ENCODE measurements at regions of chr2 and their contacts with region 1.

Region 1: GRCh38 chr2:41698678-41699422 is 349.0 kb upstream of the PKDCC start:
- DNase-seq: peak; percentile 60 to 85
- ATAC-seq: peak; percentile 67
- H3K4me3 ChIP-seq: peak overlapping the region in 1 of 2 donors; percentile 7
- H3K27ac ChIP-seq: no peak overlapping the region
- H3K4me1 ChIP-seq: peaks cover 0 to 5% of the 10 kb centered on the region in 2 donors
- H3K27me3 ChIP-seq: no peaks in the 10 kb centered on the region

Region 2: GRCh38 chr2:41414486-41415230 is 284.2 kb before region 1 on chr2:
- intact Hi-C with region 1: loop called (anchors 2 to 5 kb)
- DNase-seq: no peak
- ATAC-seq: no peak
- H3K4me3 ChIP-seq: no peak overlapping the region
- H3K27ac ChIP-seq: no peak overlapping the region
- H3K4me1 ChIP-seq: peaks cover 0 to 1% of the 10 kb centered on the region in 2 donors
- H3K27me3 ChIP-seq: no peaks in the 10 kb centered on the region

Region 3: DNA sequence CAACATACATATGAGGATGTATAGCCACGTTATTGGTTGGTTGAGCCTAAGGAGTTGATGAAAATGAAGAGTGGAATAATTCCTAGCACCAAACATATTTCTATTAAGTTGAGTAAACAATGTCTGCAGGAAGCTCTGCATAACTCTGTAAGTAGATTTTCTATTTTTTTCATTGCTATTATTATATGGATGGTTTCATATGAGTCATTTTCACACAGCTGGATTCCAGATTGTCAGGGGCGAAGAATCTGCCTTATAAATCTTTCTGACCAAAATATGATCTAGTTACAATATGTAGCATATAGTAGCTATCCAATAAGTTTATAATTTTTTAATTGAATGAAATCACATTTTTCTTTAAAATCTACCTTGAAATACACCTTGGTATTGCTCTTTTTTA is 119.0 kb before region 1 on chr2:
- intact Hi-C with region 1: loop called in 1 of 2 experiments (anchors 10 kb)
- DNase-seq: no peak
- ATAC-seq: no peak
- H3K4me3 ChIP-seq: no peak overlapping the region
- H3K27ac ChIP-seq: no peak overlapping the region
- H3K4me1 ChIP-seq: no peaks in the 10 kb centered on the region
- H3K27me3 ChIP-seq: no peaks in the 10 kb centered on the region

Region 4: DNA sequence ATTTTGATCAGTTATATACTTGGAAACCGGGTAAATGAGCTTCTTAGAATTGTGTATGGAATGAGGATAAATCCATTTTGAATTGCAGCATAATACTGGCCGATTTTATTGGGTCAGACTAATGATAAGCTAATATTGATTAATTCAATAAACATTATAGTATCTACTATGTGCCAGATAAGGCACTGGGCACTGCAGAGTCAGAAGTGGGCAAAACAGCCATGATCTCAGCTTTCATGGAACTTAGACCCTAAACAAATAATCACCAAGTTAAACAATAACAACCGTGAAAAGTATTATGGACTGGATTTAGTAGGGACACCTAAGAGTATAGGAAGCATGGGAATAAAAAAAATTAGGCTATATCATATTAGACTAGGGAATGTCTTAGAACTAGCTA is 52.0 kb after region 1 on chr2:
- intact Hi-C with region 1: no loop called
- DNase-seq: no peak
- ATAC-seq: no peak
- H3K4me3 ChIP-seq: no peak overlapping the region
- H3K27ac ChIP-seq: no peak overlapping the region
- H3K4me1 ChIP-seq: no peaks in the 10 kb centered on the region
- H3K27me3 ChIP-seq: no peaks in the 10 kb centered on the region

Region 5: GRCh38 chr2:41782306-41783158 is 83.7 kb after region 1 on chr2:
- intact Hi-C with region 1: loop called in 1 of 2 experiments (anchors 5 kb)
- DNase-seq: no peak
- ATAC-seq: no peak
- H3K4me3 ChIP-seq: no peak overlapping the region
- H3K27ac ChIP-seq: no peak overlapping the region
- H3K4me1 ChIP-seq: peaks cover 0 to 2% of the 10 kb centered on the region in 2 donors
- H3K27me3 ChIP-seq: no peaks in the 10 kb centered on the region

Region 6: GRCh38 chr2:42342061-42342794 is 643.4 kb after region 1 on chr2:
- intact Hi-C with region 1: no loop called
- DNase-seq: peak in 1 of 2 donors; percentile 84
- ATAC-seq: peak; percentile 88
- H3K4me3 ChIP-seq: no peak overlapping the region
- H3K27ac ChIP-seq: peak overlapping the region in 1 of 2 donors; percentile 61
- H3K4me1 ChIP-seq: peaks cover 0 to 4% of the 10 kb centered on the region in 2 donors
- H3K27me3 ChIP-seq: no peaks in the 10 kb centered on the region

Measured in aorta (tissue), 5 donors.